Colonic mucosa (tissue), 4 donors: ENCODE measurements at regions of chr3 and their contacts with region 1.

Region 1: GRCh38 chr3:88149509-88150362 is at the start of gene C3orf38:
- DNase-seq: peak; percentile 91
- H3K4me3 ChIP-seq: peak within 1 kb of the TSS; percentile 73
- H3K27ac ChIP-seq: peak within 1 kb of the TSS; percentile 95
- H3K4me1 ChIP-seq: no peaks in the 10 kb centered on the region
- H3K27me3 ChIP-seq: no peaks in the 10 kb centered on the region
- CTCF ChIP-seq: no peak
- total RNA-seq, gene C3orf38: 19.2 to 24.7 TPM

Region 2: GRCh38 chr3:87975716-87976115 is 174.0 kb before region 1 on chr3:
- intact Hi-C with region 1: no loop called
- DNase-seq: no peak
- H3K4me3 ChIP-seq: no peak overlapping the region
- H3K27ac ChIP-seq: no peak overlapping the region
- H3K4me1 ChIP-seq: no peaks in the 10 kb centered on the region
- H3K27me3 ChIP-seq: no peaks in the 10 kb centered on the region
- CTCF ChIP-seq: no peak

Region 3: DNA sequence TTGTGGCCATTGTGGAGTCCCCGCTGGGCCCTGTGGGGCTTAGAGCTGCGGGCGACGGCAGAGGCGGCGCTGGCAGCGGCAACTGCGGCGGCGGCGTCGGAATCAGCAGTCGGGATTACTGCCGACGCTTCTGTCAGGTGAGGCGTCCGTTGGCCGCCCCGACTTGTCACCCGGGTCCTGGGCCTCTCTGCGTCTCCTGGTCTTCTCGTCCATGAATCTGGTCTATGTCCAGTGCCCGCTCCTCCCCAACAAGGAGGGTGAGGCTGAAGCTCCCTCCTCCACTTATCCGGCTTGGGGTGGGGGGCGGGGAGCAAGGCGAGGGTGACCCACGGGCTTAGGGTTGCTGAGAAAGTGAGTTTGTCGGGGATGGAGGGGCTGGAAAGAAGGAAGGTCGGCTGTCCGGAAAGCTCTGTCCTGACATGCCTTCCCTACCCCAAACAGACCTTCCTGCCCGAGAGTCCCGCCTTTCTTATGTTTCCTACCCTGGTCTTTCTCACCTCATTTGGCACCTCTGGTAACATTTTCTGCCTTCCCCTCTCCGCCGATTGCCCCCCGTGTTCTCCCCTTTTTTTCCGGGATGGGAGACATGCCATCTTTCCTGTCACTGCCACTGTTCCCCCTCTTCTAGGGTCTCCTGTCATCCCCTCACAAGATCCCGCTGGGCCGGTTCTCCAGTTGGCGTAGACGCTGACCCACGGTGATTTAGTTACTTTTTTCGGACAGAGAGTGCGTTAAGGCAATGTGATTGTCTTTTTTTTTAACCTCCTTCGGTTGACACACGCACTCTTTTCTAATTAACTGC is 90.2 kb before region 1 on chr3:
- intact Hi-C with region 1: loop called (anchors 5 kb)
- DNase-seq: peak; percentile 47
- H3K4me3 ChIP-seq: peak overlapping the region; percentile 87
- H3K27ac ChIP-seq: peak overlapping the region; percentile 96
- H3K4me1 ChIP-seq: peaks cover 4% of the 10 kb centered on the region
- H3K27me3 ChIP-seq: no peaks in the 10 kb centered on the region
- CTCF ChIP-seq: no peak